Activated CD4-positive, alpha-beta memory T cell treated with anti-CD3 and anti-CD28 coated beads for 36 hours (primary cell): ENCODE measurements at regions of chr6 and their contacts with region 1.

Region 1: GRCh38 chr6:36623547-36624459 is 29.6 kb downstream of the SRSF3 start:
- DNase-seq: peak; percentile 87
- H3K4me3 Mint-ChIP-seq: no peak overlapping the region
- H3K27ac Mint-ChIP-seq: no peak overlapping the region
- H3K4me1 Mint-ChIP-seq: peaks cover 14% of the 10 kb centered on the region
- H3K27me3 Mint-ChIP-seq: no peaks in the 10 kb centered on the region

Region 2: GRCh38 chr6:36724514-36725390 is 100.9 kb after region 1 on chr6:
- CTCF ChIA-PET with region 1: interaction called, 10 read pairs
- POLR2A ChIA-PET with region 1: no interaction called
- intact Hi-C with region 1: loop called (anchors 1 kb)
- DNase-seq: peak; percentile 79
- H3K4me3 Mint-ChIP-seq: no peak overlapping the region
- H3K27ac Mint-ChIP-seq: no peak overlapping the region
- H3K4me1 Mint-ChIP-seq: peaks cover 20% of the 10 kb centered on the region
- H3K27me3 Mint-ChIP-seq: no peaks in the 10 kb centered on the region

Region 3: GRCh38 chr6:36780442-36781177 is 156.8 kb after region 1 on chr6:
- CTCF ChIA-PET with region 1: interaction called, 12 read pairs
- POLR2A ChIA-PET with region 1: no interaction called
- intact Hi-C with region 1: no loop called
- DNase-seq: no peak
- H3K4me3 Mint-ChIP-seq: no peak overlapping the region
- H3K27ac Mint-ChIP-seq: no peak overlapping the region
- H3K4me1 Mint-ChIP-seq: peaks cover 2% of the 10 kb centered on the region
- H3K27me3 Mint-ChIP-seq: no peaks in the 10 kb centered on the region

Region 4: GRCh38 chr6:36862164-36862847 is 238.5 kb after region 1 on chr6:
- CTCF ChIA-PET with region 1: no interaction called
- POLR2A ChIA-PET with region 1: no interaction called
- intact Hi-C with region 1: no loop called
- DNase-seq: peak; percentile 27
- H3K4me3 Mint-ChIP-seq: no peak overlapping the region
- H3K27ac Mint-ChIP-seq: peak overlapping the region; percentile 75
- H3K4me1 Mint-ChIP-seq: peaks cover 44% of the 10 kb centered on the region
- H3K27me3 Mint-ChIP-seq: no peaks in the 10 kb centered on the region